Esophagus muscularis mucosa (tissue), 4 donors: ENCODE measurements at regions of chr2 and their contacts with region 1.

Region 1: GRCh38 chr2:133652398-133652797 is 84.1 kb upstream of the NCKAP5 start:
- DNase-seq: no peak
- H3K4me3 ChIP-seq: no peak overlapping the region
- H3K27ac ChIP-seq: peak overlapping the region in 3 of 4 donors; percentile 9 to 54 (median 54)
- H3K4me1 ChIP-seq: peaks cover 7 to 17% (median 14%) of the 10 kb centered on the region in 4 donors
- H3K27me3 ChIP-seq: no peaks in the 10 kb centered on the region
- CTCF ChIP-seq: no peak
- EP300 ChIP-seq: no peak
- POLR2A ChIP-seq: no peak

Region 2: DNA sequence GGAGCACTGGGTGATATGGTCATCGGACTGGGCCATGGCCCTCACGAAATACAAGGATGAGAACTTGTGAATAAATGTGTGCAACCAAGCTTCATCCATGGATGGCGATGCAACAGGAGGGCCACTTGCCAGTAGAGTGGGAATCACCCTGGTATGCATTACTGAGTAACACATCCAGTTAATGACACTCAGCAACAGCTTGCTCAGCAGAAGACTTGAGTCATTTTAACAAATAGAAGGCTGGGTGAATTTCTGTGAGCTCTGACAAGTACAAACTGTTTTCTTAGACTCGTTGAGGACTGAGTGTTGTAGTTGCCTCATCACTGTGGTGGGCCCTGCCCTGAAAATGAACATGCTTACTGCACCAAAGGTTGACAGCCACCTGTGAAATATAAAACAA is 305.7 kb before region 1 on chr2:
- intact Hi-C with region 1: no loop called
- DNase-seq: no peak
- H3K4me3 ChIP-seq: no peak overlapping the region
- H3K27ac ChIP-seq: no peak overlapping the region
- H3K4me1 ChIP-seq: no peaks in the 10 kb centered on the region
- H3K27me3 ChIP-seq: no peaks in the 10 kb centered on the region
- CTCF ChIP-seq: no peak
- EP300 ChIP-seq: no peak
- POLR2A ChIP-seq: no peak

Region 3: DNA sequence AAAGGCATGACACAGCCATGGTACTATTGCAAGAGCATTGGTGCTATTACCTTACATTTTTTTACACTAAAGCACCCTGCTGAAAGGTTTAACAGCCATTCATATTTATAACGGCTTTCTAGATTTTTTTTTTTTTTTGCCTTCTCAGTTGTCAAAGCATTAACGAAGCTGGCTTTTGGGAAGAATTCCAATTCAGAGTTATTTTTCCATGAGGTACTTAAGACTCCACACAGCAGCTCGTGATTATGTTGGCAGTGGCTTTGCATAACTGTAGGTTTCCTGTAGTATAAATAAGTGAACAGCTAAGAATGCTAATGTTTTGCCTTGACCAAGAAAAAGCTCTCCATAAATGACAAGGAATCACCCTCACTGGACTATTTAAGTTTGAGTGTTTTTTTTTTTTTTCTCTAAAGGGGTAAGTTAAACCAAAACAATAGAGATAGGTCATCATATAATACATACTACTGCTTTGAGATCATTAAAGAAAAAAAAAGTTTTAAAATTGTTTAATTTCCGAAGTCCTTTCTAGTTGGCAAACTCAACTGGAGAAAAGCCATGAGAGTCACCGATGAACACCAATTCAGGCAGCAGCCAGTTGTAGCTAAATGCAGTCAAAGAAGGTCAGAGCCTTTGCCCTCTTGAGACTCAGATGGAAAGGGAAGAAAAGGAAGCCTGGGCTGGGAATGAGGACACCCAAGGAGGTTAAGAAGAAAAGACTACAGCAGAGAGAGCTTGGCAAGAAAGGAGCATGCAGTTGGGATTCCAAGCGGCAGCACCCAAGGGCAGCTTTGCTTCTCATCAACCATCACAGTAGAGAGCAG is 103.3 kb after region 1 on chr2:
- intact Hi-C with region 1: no loop called
- DNase-seq: no peak
- H3K4me3 ChIP-seq: no peak overlapping the region
- H3K27ac ChIP-seq: peak overlapping the region; percentile 77 to 81 (median 80)
- H3K4me1 ChIP-seq: peaks cover 7 to 31% (median 22%) of the 10 kb centered on the region in 4 donors
- H3K27me3 ChIP-seq: no peaks in the 10 kb centered on the region
- CTCF ChIP-seq: no peak
- EP300 ChIP-seq: peak; percentile 33
- POLR2A ChIP-seq: no peak

Region 4: DNA sequence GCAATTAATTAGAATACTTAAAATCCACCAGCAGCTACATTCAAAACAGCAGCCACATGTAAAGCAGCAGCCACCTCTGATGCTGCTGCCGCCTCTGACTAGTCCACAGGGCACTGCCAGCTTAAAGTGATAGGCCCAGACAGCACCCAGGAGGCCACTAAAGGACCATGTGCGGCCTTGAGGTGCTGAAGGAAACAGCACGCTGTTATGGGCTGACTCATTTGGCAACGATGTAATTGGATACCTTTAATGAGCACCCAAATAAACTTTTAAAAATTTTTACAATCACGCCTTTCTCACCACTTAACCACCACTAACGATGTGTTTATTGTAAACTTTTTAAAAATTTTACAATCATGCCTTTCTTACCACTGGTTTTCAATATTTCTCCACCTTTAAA is 125.2 kb after region 1 on chr2:
- intact Hi-C with region 1: loop called (anchors 10 kb)
- DNase-seq: no peak
- H3K4me3 ChIP-seq: no peak overlapping the region
- H3K27ac ChIP-seq: no peak overlapping the region
- H3K4me1 ChIP-seq: peaks cover 20 to 24% (median 22%) of the 10 kb centered on the region in 4 donors
- H3K27me3 ChIP-seq: no peaks in the 10 kb centered on the region
- CTCF ChIP-seq: no peak
- EP300 ChIP-seq: no peak
- POLR2A ChIP-seq: no peak